ENCODE measurements at regions of chr22 and their contacts with region 1.

Region 1: DNA sequence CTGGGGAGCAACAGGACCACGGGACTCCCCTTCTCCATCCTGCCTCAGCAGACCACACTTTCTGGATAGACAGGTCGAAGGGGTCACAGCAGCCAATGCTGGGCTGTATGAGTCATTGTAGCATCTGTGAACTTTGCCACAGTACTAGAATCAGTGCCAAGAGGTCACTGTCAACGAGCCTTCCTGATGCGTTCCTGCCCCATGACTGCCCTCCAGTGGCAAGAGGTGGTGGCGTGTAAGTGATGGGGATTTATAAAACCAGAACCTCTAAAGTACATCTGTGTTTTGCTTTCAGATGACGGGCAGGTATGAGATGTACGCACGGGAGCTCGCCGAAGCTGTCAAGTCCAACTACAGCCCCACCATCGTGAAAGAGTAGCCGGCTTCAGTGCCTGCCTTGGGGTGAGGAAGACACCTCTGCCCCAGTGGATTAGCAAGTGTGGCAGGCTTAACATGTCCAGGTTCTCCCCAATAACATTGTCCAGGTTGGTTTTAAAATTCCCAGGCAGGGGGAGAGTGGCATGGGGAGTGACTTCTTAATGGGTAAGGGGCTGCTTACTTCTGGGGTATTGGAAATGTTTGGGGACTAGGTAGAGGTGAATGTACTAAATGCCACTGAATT is 29.4 kb downstream of the GUCD1 start:
- DNase-seq: peak; percentile 80
- H3K4me3 ChIP-seq: no peak overlapping the region
- H3K27ac ChIP-seq: no peak overlapping the region
- H3K4me1 ChIP-seq: peaks cover 0 to 8% (median 4%) of the 10 kb centered on the region in 4 donors
- H3K27me3 ChIP-seq: no peaks in the 10 kb centered on the region
- CTCF ChIP-seq: peak; percentile 50 to 84 (median 72)
- EP300 ChIP-seq: no peak
- POLR2A ChIP-seq: no peak

Region 2: GRCh38 chr22:24325105-24325757 is 200.3 kb before region 1 on chr22:
- intact Hi-C with region 1: loop called (anchors 2 kb)
- DNase-seq: no peak
- H3K4me3 ChIP-seq: no peak overlapping the region
- H3K27ac ChIP-seq: no peak overlapping the region
- H3K4me1 ChIP-seq: peaks cover 0 to 22% (median 7%) of the 10 kb centered on the region in 4 donors
- H3K27me3 ChIP-seq: no peaks in the 10 kb centered on the region
- CTCF ChIP-seq: peak; percentile 15 to 38 (median 30)
- EP300 ChIP-seq: no peak
- POLR2A ChIP-seq: no peak

Region 3: DNA sequence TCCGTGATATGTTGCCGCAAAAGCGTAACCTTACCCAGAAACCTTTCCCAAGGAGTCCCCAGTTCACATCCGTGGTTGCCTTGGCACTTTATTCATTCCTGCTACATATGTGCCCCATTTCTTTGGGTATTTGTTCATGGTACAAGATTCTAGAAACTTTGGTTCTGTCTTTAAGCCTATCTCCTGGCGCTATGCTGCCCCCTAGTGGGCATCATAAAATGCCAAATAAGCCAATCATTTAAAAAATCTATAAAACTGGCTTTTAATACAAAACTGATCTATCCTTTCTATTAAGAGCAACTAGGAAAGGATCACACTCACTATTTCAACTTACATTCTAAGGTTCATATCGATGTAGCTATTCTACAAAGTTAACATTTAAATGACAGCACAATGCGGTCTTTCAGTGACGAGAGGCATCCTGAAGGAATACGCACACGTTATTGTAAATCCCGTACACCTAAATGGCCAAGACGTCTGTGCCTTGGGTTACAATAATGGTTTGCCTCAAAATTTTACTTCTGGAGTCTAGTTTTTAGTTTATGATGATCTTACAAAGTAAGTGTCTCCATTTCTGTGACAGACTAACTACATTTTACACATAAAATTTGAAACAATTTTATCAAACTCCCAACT is 232.8 kb after region 1 on chr22:
- intact Hi-C with region 1: loop called (anchors 5 kb)
- DNase-seq: peak; percentile 67
- H3K4me3 ChIP-seq: no peak overlapping the region
- H3K27ac ChIP-seq: no peak overlapping the region
- H3K4me1 ChIP-seq: no peaks in the 10 kb centered on the region
- H3K27me3 ChIP-seq: peaks cover 0 to 8% (median 0%) of the 10 kb centered on the region in 3 donors
- CTCF ChIP-seq: peak in 3 of 4 experiments; percentile 56 to 91 (median 69)
- EP300 ChIP-seq: no peak
- POLR2A ChIP-seq: no peak

Measured in sigmoid colon (tissue), 7 donors.